ENCODE measurements at regions of chr2 and their contacts with region 1.

Region 1: GRCh38 chr2:10434886-10435819 is 13.0 kb downstream of the ODC1 start:
- DNase-seq: peak; percentile 65
- H3K4me3 Mint-ChIP-seq: no peak overlapping the region
- H3K27ac Mint-ChIP-seq: peak overlapping the region; percentile 35
- H3K4me1 Mint-ChIP-seq: peaks cover 6% of the 10 kb centered on the region
- H3K27me3 Mint-ChIP-seq: peaks cover 2% of the 10 kb centered on the region

Region 2: DNA sequence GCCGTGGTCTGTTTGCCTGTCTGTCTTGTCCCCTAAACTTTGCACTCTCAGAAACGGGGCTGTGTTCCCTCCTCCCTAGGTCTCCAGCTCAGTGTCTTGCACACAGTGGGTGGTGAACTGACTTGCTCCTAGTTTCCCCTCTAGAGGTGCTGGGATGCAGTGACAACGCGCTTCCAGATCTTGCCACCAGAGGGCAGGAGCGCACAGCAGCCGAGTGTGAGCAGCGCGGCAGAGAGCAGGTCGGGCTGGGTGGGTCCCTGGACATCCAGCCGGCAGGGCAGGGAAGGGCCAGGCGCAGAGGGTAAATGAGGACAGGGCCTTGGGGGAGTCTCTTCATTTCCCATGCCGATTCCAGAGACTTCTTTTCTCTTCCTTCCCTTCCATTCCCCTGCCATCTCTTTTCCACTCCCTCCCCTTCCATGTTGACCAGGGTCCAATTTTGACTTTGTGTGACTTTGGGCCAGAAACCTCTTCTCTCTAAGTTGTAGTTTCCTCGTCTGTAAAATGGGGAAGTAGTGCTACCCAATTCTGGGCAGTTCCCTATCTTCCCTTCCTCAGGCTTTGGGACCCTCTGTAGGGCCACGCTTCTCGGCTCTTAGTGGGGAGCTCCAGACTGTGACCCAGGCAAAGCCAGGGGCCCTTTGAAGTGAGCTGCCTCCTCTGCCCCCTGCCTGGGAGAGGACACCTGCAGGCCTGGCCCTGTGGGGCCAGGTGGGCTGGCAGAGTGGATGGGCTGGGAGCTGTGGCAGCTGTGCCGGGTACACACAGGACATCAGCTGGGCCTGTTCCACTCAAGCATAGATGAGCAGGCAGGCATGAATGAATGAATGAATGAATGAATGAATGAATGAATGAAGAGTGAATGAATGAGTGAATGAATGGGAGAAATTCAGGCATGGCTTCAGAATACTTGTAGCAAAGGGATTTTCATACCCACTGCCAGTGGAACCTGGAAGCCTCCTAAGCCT is 635.2 kb before region 1 on chr2:
- intact Hi-C with region 1: loop called (anchors 1 kb)
- DNase-seq: peak; percentile 81
- H3K4me3 Mint-ChIP-seq: peak overlapping the region; percentile 66
- H3K27ac Mint-ChIP-seq: peak overlapping the region; percentile 85
- H3K4me1 Mint-ChIP-seq: peaks cover 37% of the 10 kb centered on the region
- H3K27me3 Mint-ChIP-seq: peaks cover 7% of the 10 kb centered on the region

Region 3: GRCh38 chr2:9984217-9984739 is 450.9 kb before region 1 on chr2:
- intact Hi-C with region 1: loop called (anchors 2 kb)
- DNase-seq: peak; percentile 14
- H3K4me3 Mint-ChIP-seq: no peak overlapping the region
- H3K27ac Mint-ChIP-seq: no peak overlapping the region
- H3K4me1 Mint-ChIP-seq: peaks cover 18% of the 10 kb centered on the region
- H3K27me3 Mint-ChIP-seq: peaks cover 11% of the 10 kb centered on the region

Region 4: GRCh38 chr2:10072656-10073480 is 362.3 kb before region 1 on chr2:
- intact Hi-C with region 1: loop called (anchors 1 kb)
- DNase-seq: peak; percentile 76
- H3K4me3 Mint-ChIP-seq: no peak overlapping the region
- H3K27ac Mint-ChIP-seq: no peak overlapping the region
- H3K4me1 Mint-ChIP-seq: peaks cover 16% of the 10 kb centered on the region
- H3K27me3 Mint-ChIP-seq: peaks cover 49% of the 10 kb centered on the region

Region 5: DNA sequence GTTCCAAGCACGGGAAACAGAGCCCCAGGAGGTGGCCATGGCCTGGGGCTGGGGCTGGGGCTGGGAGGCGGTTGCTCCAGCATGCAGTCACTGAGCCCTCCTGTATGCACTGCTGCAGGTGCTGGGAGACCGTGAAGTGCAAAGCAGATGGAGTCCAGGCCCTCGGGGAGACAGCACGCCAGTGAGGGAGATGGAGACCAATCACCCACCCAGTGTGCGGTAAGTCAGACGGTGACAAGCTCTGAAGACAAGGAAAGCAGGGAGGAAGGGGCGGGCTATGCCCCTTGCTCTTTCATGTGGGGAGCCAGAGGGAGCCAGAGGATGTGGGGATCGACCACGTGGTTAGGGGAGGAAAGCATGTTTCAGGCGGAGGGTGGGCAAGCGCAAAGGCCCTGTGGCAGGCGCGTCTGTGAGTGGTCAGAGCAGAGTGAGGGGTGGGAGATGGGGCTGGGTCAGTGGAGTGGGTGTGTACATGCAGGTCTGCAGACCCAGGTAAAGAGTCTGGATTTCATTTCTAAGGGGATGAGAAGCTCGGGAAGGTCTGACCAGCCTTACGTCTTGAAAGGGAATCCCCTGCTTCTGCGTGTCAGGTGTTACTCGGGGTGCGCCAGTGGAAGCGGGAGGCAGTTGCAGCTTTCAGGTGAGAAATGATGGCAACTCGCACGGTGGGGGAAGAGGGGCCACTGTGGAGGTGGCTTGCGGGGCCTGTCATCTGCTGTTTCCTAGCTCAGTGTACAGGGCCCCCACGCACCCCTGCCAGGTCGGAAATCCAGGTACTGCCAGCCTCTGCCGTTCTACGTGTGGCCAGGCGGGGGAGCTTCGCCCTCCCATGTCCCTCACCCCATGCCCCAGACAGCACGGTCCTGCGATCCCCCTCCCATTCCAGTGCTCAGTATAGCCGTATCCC is 293.2 kb before region 1 on chr2:
- intact Hi-C with region 1: loop called (anchors 5 kb)
- DNase-seq: no peak
- H3K4me3 Mint-ChIP-seq: peak overlapping the region; percentile 24
- H3K27ac Mint-ChIP-seq: peak overlapping the region; percentile 49
- H3K4me1 Mint-ChIP-seq: peaks cover 31% of the 10 kb centered on the region
- H3K27me3 Mint-ChIP-seq: no peaks in the 10 kb centered on the region

Region 6: GRCh38 chr2:10269711-10270610 is 165.2 kb before region 1 on chr2:
- intact Hi-C with region 1: loop called (anchors 1 kb)
- DNase-seq: no peak
- H3K4me3 Mint-ChIP-seq: no peak overlapping the region
- H3K27ac Mint-ChIP-seq: no peak overlapping the region
- H3K4me1 Mint-ChIP-seq: no peaks in the 10 kb centered on the region
- H3K27me3 Mint-ChIP-seq: peaks cover 3% of the 10 kb centered on the region

Region 7: GRCh38 chr2:10389573-10389972 is 45.6 kb before region 1 on chr2:
- intact Hi-C with region 1: no loop called
- DNase-seq: no peak
- H3K4me3 Mint-ChIP-seq: no peak overlapping the region
- H3K27ac Mint-ChIP-seq: no peak overlapping the region
- H3K4me1 Mint-ChIP-seq: peaks cover 24% of the 10 kb centered on the region
- H3K27me3 Mint-ChIP-seq: no peaks in the 10 kb centered on the region